GM12878 (cell line): ENCODE measurements at regions of chr1 and their contacts with region 1.

Region 1: GRCh38 chr1:39609618-39610331 is 29.7 kb downstream of the HEYL start:
- DNase-seq: no peak
- ATAC-seq: peak; percentile 97
- H3K4me3 ChIP-seq: no peak overlapping the region
- H3K27ac ChIP-seq: no peak overlapping the region
- H3K4me1 ChIP-seq: peaks cover 5% of the 10 kb centered on the region
- H3K27me3 ChIP-seq: no peaks in the 10 kb centered on the region
- CTCF ChIP-seq: peak; percentile 78 to 95 (median 81)
- EP300 ChIP-seq: no peak
- POLR2A ChIP-seq: no peak
- RAD21 ChIP-seq: peak; percentile 60

Region 2: GRCh38 chr1:39648496-39648895 is 38.7 kb after region 1 on chr1:
- CTCF ChIA-PET with region 1: interaction called, 312 read pairs
- POLR2A ChIA-PET with region 1: interaction called, 4 read pairs
- RAD21 ChIA-PET with region 1: interaction called, 34 read pairs
- SMC1A ChIA-PET with region 1: interaction called, 35 read pairs
- in situ Hi-C with region 1: no loop called
- intact Hi-C with region 1: loop called (anchors 1 kb)
- DNase-seq: no peak
- ATAC-seq: no peak
- H3K4me3 ChIP-seq: no peak overlapping the region
- H3K27ac ChIP-seq: no peak overlapping the region
- H3K4me1 ChIP-seq: no peaks in the 10 kb centered on the region
- H3K27me3 ChIP-seq: no peaks in the 10 kb centered on the region
- CTCF ChIP-seq: no peak
- EP300 ChIP-seq: no peak
- POLR2A ChIP-seq: no peak
- RAD21 ChIP-seq: no peak

Region 3: GRCh38 chr1:39666772-39667171 is 57.0 kb after region 1 on chr1:
- CTCF ChIA-PET with region 1: interaction called, 312 read pairs
- POLR2A ChIA-PET with region 1: interaction called, 4 read pairs
- RAD21 ChIA-PET with region 1: interaction called, 5 read pairs
- SMC1A ChIA-PET with region 1: interaction called, 6 read pairs
- in situ Hi-C with region 1: no loop called
- intact Hi-C with region 1: no loop called
- DNase-seq: peak; percentile 93
- ATAC-seq: peak; percentile 91
- H3K4me3 ChIP-seq: no peak overlapping the region
- H3K27ac ChIP-seq: peak overlapping the region; percentile 60
- H3K4me1 ChIP-seq: peaks cover 33% of the 10 kb centered on the region
- H3K27me3 ChIP-seq: peaks cover 0 to 5% of the 10 kb centered on the region in 2 experiments; a peak in 2 of 4 replicates
- CTCF ChIP-seq: no peak
- EP300 ChIP-seq: peak; percentile 77 to 92
- POLR2A ChIP-seq: no peak
- RAD21 ChIP-seq: no peak

Region 4: DNA sequence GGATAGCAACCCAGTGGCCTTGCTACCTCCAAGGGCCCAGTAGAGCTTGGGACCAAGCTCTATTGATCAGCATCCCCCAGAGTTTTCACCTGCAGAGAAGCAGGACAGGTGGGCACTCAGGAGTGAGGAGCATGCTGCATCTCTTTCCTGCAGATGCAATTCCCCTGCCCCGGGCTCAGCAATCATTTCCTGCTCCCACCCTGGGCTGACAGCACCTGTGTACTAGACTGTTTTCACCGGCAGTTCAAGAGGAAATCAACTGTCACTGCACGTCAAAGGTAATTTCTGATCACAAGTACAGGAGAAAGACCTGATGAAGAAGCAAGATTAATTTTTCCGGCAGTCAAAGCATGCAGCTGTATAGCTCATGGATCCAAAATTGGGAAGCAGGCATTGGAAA is 71.0 kb after region 1 on chr1:
- CTCF ChIA-PET with region 1: interaction called, 10 read pairs
- POLR2A ChIA-PET with region 1: no interaction called
- RAD21 ChIA-PET with region 1: no interaction called
- SMC1A ChIA-PET with region 1: interaction called, 4 read pairs
- in situ Hi-C with region 1: no loop called
- intact Hi-C with region 1: no loop called
- DNase-seq: no peak
- ATAC-seq: no peak
- H3K4me3 ChIP-seq: no peak overlapping the region
- H3K27ac ChIP-seq: no peak overlapping the region
- H3K4me1 ChIP-seq: no peaks in the 10 kb centered on the region
- H3K27me3 ChIP-seq: peaks cover 0 to 6% of the 10 kb centered on the region in 2 experiments; a peak in 3 of 4 replicates
- CTCF ChIP-seq: no peak
- EP300 ChIP-seq: no peak
- POLR2A ChIP-seq: no peak
- RAD21 ChIP-seq: no peak

Region 5: GRCh38 chr1:39762550-39763540 is 153.1 kb after region 1 on chr1:
- CTCF ChIA-PET with region 1: no interaction called
- POLR2A ChIA-PET with region 1: no interaction called
- RAD21 ChIA-PET with region 1: no interaction called
- SMC1A ChIA-PET with region 1: no interaction called
- in situ Hi-C with region 1: no loop called
- intact Hi-C with region 1: no loop called
- DNase-seq: no peak
- ATAC-seq: no peak
- H3K4me3 ChIP-seq: no peak overlapping the region
- H3K27ac ChIP-seq: no peak overlapping the region
- H3K4me1 ChIP-seq: no peaks in the 10 kb centered on the region
- H3K27me3 ChIP-seq: no peaks in the 10 kb centered on the region
- CTCF ChIP-seq: no peak
- EP300 ChIP-seq: no peak
- POLR2A ChIP-seq: 0 out of 2 replicates have a peak, but pooled peaks have one; percentile 22
- RAD21 ChIP-seq: no peak

Region 6: GRCh38 chr1:39788758-39789570 is 179.2 kb after region 1 on chr1 and contains the start of gene BMP8B:
- CTCF ChIA-PET with region 1: no interaction called
- POLR2A ChIA-PET with region 1: no interaction called
- RAD21 ChIA-PET with region 1: no interaction called
- SMC1A ChIA-PET with region 1: no interaction called
- in situ Hi-C with region 1: no loop called
- intact Hi-C with region 1: no loop called
- DNase-seq: no peak
- ATAC-seq: peak; percentile 81
- H3K4me3 ChIP-seq: peak within 1 kb of the TSS; percentile 68; the same call in 1 of the 2 replicates
- H3K27ac ChIP-seq: no peak within 1 kb of the TSS
- H3K4me1 ChIP-seq: peaks cover 11% of the 10 kb centered on the region
- H3K27me3 ChIP-seq: 0 out of 4 replicates have a peak, but pooled peaks cover 0 to 3% of the 10 kb centered on the region in 2 experiments
- CTCF ChIP-seq: peak in 1 of 3 experiments; percentile 5; a peak in 1 of 6 replicates
- EP300 ChIP-seq: 0 out of 4 replicates have a peak, but pooled peaks of 1 of the 2 experiments have one; percentile 24
- POLR2A ChIP-seq: peak; percentile 73
- RAD21 ChIP-seq: no peak
- polyA plus RNA-seq, gene BMP8B: 0.23 to 0.37 TPM

Region 7: DNA sequence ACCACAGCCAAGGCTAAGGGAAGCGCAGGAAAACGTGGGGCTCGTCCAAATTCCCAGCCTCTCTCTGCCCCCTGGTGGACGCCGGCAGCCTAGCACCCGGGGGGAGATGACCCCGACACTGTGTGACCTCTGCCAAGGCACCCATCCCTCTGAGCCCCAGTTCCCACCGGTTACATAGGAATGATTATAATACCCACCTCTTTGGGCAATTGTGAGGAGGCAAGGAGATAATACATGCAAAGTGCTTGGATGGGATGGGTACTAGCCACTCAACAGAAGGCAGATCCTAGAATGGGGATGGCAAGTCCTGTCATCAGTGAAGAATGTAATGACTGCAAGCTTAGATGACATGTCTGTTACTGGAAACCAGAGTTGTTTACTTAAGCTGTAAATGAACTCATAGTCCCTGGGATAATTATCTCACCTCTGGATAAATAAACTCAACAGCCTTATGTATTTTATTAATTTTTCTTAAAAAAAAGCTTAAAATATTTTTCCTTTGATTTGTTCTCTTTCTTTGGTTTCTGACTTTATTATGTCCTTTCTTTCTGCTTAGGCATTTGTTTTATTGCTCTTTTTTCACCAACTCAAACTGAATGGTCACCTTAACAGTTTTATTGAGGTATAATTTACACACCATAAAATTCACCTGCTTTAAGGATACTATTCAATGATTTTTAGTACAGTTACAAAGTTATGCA is 190.1 kb after region 1 on chr1:
- CTCF ChIA-PET with region 1: interaction called, 16 read pairs
- POLR2A ChIA-PET with region 1: interaction called, 4 read pairs
- RAD21 ChIA-PET with region 1: interaction called, 5 read pairs
- SMC1A ChIA-PET with region 1: interaction called, 4 read pairs
- in situ Hi-C with region 1: no loop called
- intact Hi-C with region 1: loop called (anchors 5 kb)
- DNase-seq: no peak
- ATAC-seq: peak; percentile 85
- H3K4me3 ChIP-seq: no peak overlapping the region
- H3K27ac ChIP-seq: peak overlapping the region; percentile 53; the same call in 1 of the 2 replicates
- H3K4me1 ChIP-seq: peaks cover 6% of the 10 kb centered on the region
- H3K27me3 ChIP-seq: no peaks in the 10 kb centered on the region
- CTCF ChIP-seq: peak; percentile 65 to 88 (median 81)
- EP300 ChIP-seq: no peak
- POLR2A ChIP-seq: no peak
- RAD21 ChIP-seq: peak; percentile 58

Region 8: DNA sequence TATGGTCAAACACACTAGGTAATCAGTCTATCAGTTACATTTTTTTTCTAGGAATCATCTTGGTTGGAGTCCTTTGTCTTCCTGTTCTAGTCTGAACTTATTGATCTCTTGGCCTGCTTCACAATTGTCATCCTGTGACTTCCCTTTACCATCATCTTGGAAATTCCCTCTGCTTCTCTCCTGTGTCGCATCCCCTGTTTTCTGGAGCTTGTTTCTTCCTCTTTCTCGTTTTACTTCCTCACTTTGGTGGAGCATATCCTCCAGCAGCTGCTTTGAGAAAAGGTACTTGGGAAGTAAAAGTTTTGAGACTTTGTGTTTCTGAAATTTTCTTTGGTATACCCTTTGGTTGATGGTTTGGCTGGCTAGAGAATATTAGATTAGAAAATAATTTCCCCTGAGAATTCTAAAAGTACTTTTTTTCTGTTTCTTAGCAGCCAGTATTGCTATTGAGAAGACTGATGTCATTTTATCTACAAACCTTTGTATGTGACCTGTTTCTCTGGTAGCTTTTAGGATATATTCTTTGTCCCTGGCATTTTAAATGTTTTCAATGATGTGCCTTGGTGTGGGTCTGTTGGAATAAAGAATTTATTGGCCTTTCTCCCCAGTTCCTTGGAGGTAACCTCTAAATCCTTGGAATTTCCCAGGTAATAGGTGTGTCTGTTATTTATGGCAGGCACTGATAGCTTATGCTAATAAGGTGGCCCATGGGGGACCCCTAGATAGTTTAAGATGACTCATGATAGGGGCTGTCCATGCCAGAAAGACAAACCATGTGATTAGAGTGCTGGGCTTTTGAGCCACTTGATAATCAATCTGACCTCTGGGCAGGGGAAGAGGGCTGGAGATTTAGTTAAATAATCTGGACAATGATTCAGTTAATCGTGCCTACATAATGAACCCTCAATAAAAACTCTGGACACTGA is 298.0 kb after region 1 on chr1:
- CTCF ChIA-PET with region 1: no interaction called
- POLR2A ChIA-PET with region 1: no interaction called
- RAD21 ChIA-PET with region 1: no interaction called
- SMC1A ChIA-PET with region 1: no interaction called
- in situ Hi-C with region 1: no loop called
- intact Hi-C with region 1: no loop called
- DNase-seq: peak; percentile 30
- ATAC-seq: peak; percentile 49
- H3K4me3 ChIP-seq: no peak overlapping the region
- H3K27ac ChIP-seq: peak overlapping the region; percentile 58
- H3K4me1 ChIP-seq: 0 out of 2 replicates have a peak, but pooled peaks cover 5% of the 10 kb centered on the region
- H3K27me3 ChIP-seq: no peaks in the 10 kb centered on the region; a peak in 1 of 4 replicates
- CTCF ChIP-seq: no peak
- EP300 ChIP-seq: no peak
- POLR2A ChIP-seq: no peak
- RAD21 ChIP-seq: no peak